ENCODE measurements at regions of chr3 and their contacts with region 1.

Region 1: GRCh38 chr3:146382386-146382785 is 87.0 kb downstream of the PLSCR2 start:
- DNase-seq: peak; percentile 61
- ATAC-seq: peak; percentile 93
- H3K4me3 ChIP-seq: no peak overlapping the region
- H3K27ac ChIP-seq: no peak overlapping the region
- H3K4me1 ChIP-seq: no peaks in the 10 kb centered on the region
- H3K27me3 ChIP-seq: no peaks in the 10 kb centered on the region
- CTCF ChIP-seq: peak; percentile 58

Region 2: DNA sequence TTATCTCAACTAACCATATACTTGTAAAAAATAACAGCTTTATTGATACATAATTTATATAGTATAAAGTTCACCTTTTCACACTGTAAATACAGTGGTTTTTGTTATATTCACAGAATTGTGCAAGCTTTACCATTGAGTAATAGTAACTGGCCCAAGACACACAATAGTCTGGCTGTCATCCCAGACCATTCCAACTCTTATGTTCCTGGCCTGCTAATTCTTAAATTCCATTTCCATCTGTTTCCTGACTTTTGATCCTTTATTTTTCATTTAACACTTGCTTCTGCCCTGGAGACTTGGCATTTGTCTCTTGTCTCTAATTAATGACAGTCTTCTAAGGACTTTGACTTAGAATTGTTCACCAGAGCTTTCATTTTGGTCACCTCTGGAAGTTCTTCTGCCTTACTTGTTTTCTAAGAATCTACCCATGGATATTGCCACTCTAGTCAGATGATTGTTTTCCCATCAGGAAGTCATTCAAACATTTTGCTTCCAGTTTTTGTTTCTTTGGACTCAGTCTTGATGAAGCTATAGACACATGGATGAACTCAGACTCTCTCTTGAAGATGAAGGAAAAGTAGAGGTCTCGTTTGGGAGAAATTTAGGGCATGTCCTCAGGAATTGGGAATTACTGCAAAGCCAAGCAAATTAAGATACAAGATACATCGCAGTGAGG is 104.3 kb before region 1 on chr3:
- CTCF ChIA-PET with region 1: no interaction called
- POLR2A ChIA-PET with region 1: no interaction called
- intact Hi-C with region 1: no loop called
- DNase-seq: peak; percentile 85
- ATAC-seq: peak; percentile 97
- H3K4me3 ChIP-seq: no peak overlapping the region
- H3K27ac ChIP-seq: peak overlapping the region; percentile 28
- H3K4me1 ChIP-seq: peaks cover 10% of the 10 kb centered on the region
- H3K27me3 ChIP-seq: no peaks in the 10 kb centered on the region
- CTCF ChIP-seq: no peak

Region 3: DNA sequence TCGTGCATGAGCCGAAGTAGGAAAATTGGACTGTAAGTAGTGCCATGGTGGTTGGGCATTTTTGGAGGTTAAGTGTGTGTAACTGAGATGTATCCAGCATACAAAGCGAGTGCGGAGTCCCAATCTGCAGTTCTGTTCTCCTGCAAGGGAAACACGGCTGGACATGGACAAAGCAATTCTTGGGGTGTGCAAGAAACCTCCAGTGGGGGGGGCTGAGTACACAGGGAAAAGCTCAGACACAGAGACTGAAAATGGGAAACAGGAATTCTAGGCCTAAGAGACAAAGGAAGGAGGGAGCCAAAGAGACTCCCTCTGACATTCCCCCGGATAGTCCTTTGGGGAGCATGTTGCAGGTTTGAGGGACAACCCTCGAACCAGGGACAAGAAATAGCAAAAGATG is 48.2 kb before region 1 on chr3:
- CTCF ChIA-PET with region 1: no interaction called
- POLR2A ChIA-PET with region 1: no interaction called
- intact Hi-C with region 1: loop called (anchors 5 kb)
- DNase-seq: peak; percentile 60
- ATAC-seq: peak; percentile 70
- H3K4me3 ChIP-seq: no peak overlapping the region
- H3K27ac ChIP-seq: no peak overlapping the region
- H3K4me1 ChIP-seq: no peaks in the 10 kb centered on the region
- H3K27me3 ChIP-seq: no peaks in the 10 kb centered on the region
- CTCF ChIP-seq: peak; percentile 58